WTC11 (cell line): ENCODE measurements at regions of chr3 and their contacts with region 1.

Region 1: DNA sequence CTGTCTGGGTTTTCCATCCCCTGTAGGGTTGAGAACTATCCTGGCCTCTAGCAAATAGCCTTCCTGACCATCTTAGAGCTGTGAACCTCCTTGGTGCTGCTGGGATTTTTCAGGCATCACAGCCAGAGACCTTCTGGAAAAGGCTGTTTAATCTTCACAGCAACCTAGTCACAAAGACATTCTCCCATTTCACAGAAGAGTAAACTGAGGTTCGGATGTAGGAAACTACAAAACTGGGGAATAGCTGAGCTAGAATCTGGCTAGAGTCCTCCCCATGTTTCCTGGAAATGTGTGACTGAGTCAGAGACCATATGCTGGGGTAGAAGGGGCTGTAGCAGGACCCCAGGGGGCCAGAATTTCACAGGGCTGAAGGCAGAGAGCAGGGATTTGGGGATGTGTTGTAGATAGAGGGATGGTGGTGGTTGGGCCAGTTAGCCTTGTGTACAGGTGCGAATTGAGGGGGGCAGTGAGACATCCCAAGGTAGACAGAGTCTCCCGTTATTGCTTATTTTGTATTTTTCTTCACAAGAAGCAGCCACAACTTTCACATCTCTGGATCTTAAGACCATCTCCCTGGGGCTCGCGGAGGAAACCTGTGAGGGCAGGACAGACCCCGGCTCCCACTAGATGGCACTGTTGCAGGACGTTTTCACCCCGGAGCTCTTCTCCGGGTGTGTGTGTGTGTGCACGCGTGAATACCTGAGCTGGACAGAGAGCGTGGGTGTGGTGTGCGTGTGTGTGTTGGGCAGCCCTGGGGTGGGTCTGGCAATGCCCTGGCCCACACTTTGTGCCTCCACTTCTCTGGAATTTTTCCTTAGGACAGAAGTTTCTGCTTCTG is 66.9 kb upstream of the PRR23C start:
- DNase-seq: peak; percentile 76
- ATAC-seq: peak; percentile 84
- H3K4me3 Mint-ChIP-seq: no peak overlapping the region
- H3K27ac Mint-ChIP-seq: no peak overlapping the region
- H3K4me1 Mint-ChIP-seq: no peaks in the 10 kb centered on the region
- H3K27me3 Mint-ChIP-seq: peaks cover 6% of the 10 kb centered on the region
- CTCF ChIP-seq: peak; percentile 63

Region 2: GRCh38 chr3:139032326-139033002 is 79.1 kb before region 1 on chr3:
- CTCF ChIA-PET with region 1: no interaction called
- POLR2A ChIA-PET with region 1: no interaction called
- DNase-seq: no peak
- ATAC-seq: no peak
- H3K4me3 Mint-ChIP-seq: no peak overlapping the region
- H3K27ac Mint-ChIP-seq: no peak overlapping the region
- H3K4me1 Mint-ChIP-seq: no peaks in the 10 kb centered on the region
- H3K27me3 Mint-ChIP-seq: peaks cover 14% of the 10 kb centered on the region
- CTCF ChIP-seq: no peak

Region 3: DNA sequence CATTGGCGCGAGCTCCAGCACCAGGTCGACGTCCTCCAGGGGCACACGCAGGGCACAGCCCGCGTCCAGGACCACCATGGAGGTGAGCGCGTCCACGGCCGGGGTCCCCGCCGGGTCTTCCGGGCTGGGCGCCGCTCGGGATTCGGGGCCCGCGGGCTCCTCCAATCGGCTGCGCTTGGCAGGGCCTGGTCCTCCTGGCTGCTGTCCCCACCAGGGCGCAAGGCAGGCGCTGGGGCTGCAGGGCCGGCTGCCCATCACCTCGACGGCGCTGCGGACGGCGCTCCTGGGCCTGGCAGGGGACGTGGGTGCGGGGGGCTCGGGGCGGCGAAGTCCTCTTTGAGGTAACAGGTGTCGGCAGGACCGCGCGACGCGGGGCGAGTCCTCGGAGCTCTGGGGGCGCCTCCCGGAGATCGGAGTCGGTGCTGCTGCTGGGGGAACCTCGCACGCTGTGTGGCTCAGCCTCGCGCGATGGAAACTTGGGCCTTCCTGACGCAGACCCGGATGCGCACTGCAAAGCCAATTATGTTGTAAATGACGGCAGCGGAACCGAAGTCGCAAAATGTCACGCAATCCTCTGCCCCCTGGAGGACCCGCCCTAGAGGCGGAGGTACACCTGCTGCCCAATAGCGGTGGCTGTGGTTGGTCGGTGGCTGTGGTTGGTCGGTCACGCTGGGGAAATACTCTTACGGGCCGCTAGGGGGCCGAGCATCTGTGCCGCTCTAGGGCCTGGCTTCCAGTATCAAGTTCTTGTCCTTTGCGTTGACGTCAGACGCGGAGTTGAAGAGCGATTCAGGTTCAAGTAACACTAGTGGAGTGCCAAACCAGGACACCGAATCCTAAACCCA is 67.0 kb before region 1 on chr3 and contains the start of gene PRR23C:
- CTCF ChIA-PET with region 1: no interaction called
- POLR2A ChIA-PET with region 1: no interaction called
- DNase-seq: peak; percentile 14
- ATAC-seq: peak; percentile 73
- H3K4me3 Mint-ChIP-seq: no peak within 1 kb of the TSS
- H3K27ac Mint-ChIP-seq: no peak within 1 kb of the TSS
- H3K4me1 Mint-ChIP-seq: no peaks in the 10 kb centered on the region
- H3K27me3 Mint-ChIP-seq: no peaks in the 10 kb centered on the region; the same call in 1 of the 2 replicates
- CTCF ChIP-seq: no peak
- total RNA-seq, gene PRR23C: not detected in 3 replicates

Region 4: DNA sequence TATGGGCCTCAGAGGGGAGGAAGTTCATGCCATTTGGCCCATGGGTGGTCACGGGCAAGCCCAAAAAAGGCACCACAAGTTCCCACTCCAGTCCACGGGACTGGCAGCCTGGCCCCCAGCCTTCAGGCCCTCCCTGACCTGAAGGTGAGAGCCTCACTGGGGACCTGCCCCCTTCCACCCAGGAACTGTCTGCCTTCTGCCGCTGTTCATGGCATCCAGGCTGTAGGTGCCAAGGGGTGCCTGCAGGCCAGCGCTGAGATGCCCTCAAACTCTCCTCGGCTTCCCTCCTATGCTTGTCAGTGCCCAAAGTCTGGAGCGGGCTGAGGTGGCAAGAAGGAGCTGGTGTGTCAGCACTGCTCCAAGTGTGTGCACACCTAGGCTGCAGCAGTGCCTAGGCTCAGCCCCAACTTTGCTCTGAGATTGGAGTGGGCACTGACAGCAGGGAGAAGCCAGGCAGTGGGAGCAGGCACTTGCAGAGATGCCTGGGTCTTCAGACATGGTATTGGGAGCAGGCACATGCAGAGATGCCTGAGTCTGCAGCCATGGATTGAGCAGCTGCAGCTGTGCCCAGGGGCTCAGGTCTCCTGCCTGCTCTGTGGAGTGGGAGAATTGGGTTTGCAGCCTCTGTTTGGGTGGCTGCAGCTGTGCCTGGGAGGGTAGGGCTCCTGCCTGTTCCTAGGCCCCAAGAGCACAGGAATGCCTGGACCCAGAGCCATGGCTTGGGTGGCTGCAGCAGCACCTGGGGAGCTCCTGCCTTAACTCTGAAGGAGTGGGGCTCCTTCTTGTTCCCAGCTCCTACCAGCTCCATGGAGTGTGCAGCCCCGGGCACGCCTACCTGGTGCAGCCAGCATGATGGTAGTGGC is 22.9 kb before region 1 on chr3:
- CTCF ChIA-PET with region 1: interaction called, 11 read pairs
- POLR2A ChIA-PET with region 1: no interaction called
- DNase-seq: no peak
- ATAC-seq: no peak
- H3K4me3 Mint-ChIP-seq: no peak overlapping the region
- H3K27ac Mint-ChIP-seq: no peak overlapping the region
- H3K4me1 Mint-ChIP-seq: no peaks in the 10 kb centered on the region
- H3K27me3 Mint-ChIP-seq: peaks cover 4% of the 10 kb centered on the region
- CTCF ChIP-seq: no peak

Region 5: GRCh38 chr3:139101396-139101795 is 10.2 kb before region 1 on chr3:
- CTCF ChIA-PET with region 1: interaction called, 21 read pairs
- POLR2A ChIA-PET with region 1: no interaction called
- DNase-seq: no peak
- ATAC-seq: no peak
- H3K4me3 Mint-ChIP-seq: no peak overlapping the region
- H3K27ac Mint-ChIP-seq: no peak overlapping the region
- H3K4me1 Mint-ChIP-seq: peaks cover 3% of the 10 kb centered on the region; the same call in 1 of the 2 replicates
- H3K27me3 Mint-ChIP-seq: no peaks in the 10 kb centered on the region
- CTCF ChIP-seq: no peak

Region 6: DNA sequence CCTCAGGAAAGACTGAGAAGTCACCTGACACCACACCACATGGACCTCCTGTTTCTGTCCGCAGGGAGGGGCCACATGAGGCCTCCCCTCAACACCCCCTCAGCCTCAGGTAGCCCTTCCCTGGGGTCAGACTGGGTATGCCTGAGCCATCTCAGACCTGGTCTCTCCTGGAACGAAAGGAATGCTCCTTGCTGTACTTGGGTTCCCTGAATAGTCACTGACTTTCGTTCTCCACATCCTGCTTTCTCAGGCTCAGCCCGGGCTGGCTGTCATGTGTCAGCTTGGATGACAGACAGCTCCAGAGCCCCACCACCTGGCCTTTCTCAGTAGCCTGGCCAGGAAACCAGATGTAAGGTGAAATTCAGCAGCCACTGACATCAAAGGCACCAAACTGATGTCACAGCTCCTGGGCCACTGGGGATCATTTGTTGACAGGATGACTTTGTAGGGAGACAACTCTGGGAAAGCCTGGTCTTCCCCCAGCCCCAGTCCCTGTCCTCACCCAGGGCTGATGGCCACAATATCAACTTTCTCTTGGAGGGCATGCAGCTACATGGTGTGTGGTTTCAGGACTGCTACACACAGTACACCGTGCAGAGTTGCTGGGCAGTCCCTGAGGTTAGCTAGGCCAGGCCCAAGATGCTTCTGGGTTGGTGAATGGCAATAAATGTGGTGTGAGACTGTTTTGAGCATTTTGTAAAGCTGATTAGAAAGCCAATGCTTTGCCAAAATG is 90.8 kb after region 1 on chr3:
- CTCF ChIA-PET with region 1: interaction called, 16 read pairs
- POLR2A ChIA-PET with region 1: no interaction called
- DNase-seq: peak; percentile 73
- ATAC-seq: peak; percentile 92
- H3K4me3 Mint-ChIP-seq: no peak overlapping the region
- H3K27ac Mint-ChIP-seq: no peak overlapping the region
- H3K4me1 Mint-ChIP-seq: peaks cover 6% of the 10 kb centered on the region
- H3K27me3 Mint-ChIP-seq: peaks cover 5% of the 10 kb centered on the region; the same call in 1 of the 2 replicates
- CTCF ChIP-seq: no peak

Region 7: DNA sequence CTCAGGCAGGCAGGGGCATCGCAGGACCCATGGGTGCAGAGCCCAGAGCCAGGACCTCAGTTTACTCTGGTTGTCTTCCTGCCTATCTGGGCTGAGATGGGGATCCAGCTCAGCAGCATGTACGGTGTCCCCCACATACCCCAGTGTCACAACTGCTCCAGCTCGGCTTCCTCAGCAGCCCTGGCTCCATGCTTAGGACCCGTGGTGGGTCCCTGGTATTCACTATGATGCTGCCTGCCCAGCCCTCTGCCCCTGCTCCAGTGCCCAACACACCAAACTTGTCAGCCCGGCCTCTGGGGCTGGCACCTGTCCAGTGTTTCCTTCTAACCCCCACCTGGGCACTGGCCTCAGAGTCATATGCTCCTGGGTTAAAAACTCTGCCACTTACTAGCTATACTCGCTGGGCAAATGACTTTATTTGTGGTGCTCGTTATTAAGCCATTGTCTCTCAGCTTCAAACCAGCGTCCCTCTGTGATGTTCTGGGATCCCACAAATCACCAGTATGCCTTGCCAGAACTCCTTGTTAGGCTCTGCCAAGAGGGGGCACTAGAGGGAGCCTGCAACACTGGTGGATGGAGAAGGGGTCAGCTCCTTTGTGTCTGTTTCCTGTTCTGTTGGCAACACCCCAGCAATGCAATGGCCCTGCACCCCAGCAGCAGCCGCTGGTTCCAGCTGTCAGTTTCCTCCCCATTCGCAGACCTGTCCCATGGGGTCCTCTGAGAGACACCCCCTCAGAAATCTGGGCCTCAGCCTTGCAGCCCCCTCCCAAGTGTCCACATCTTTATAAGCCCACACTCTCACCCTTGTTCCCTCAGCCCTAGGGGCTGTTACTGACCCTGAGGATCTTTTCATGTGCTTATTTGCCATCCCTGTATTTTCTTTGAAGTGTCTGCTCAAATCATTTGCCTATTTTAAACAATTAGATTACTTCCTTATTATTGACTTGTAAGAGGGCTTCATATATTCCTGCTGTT is 208.1 kb after region 1 on chr3:
- CTCF ChIA-PET with region 1: interaction called, 39 read pairs
- POLR2A ChIA-PET with region 1: no interaction called
- DNase-seq: peak; percentile 83
- ATAC-seq: peak; percentile 98
- H3K4me3 Mint-ChIP-seq: no peak overlapping the region
- H3K27ac Mint-ChIP-seq: no peak overlapping the region
- H3K4me1 Mint-ChIP-seq: peaks cover 10% of the 10 kb centered on the region
- H3K27me3 Mint-ChIP-seq: peaks cover 6% of the 10 kb centered on the region
- CTCF ChIP-seq: no peak

Region 8: DNA sequence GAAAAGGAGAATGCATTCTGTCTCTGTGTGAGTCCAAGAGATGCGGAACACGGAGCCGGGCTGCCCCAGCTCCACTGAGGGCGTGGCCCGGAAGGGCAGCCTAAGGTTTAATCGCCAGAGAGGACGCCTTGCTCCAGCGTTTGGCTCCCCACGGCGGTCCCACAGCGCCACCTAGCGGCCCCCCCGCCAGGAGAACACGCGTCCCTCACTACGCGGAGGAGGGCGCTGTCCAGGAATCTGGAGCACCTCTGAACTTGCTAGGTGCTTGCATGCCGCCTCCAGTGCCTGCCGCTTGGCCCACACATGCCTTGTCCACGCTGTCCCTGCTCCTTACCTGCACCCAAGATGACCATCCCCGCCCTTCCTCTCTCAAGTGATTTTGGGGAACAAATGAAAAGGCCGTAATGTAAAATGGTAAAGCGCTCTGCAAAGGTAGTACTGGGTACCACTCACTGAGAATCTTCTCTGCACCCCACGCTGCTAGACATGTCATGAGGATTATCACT is 217.8 kb after region 1 on chr3:
- CTCF ChIA-PET with region 1: interaction called, 43 read pairs
- POLR2A ChIA-PET with region 1: no interaction called
- DNase-seq: peak; percentile 96
- ATAC-seq: peak; percentile 97
- H3K4me3 Mint-ChIP-seq: peak overlapping the region; percentile 56
- H3K27ac Mint-ChIP-seq: no peak overlapping the region
- H3K4me1 Mint-ChIP-seq: peaks cover 4% of the 10 kb centered on the region; the same call in 1 of the 2 replicates
- H3K27me3 Mint-ChIP-seq: peaks cover 60% of the 10 kb centered on the region
- CTCF ChIP-seq: peak; percentile 99